ENCODE measurements at regions of chr11 and their contacts with region 1.

Region 1: GRCh38 chr11:57626895-57627294 is 22.8 kb downstream of the YPEL4 start:
- DNase-seq: no peak
- H3K4me3 ChIP-seq: no peak overlapping the region
- H3K27ac ChIP-seq: no peak overlapping the region
- H3K4me1 ChIP-seq: no peaks in the 10 kb centered on the region
- CTCF ChIP-seq: no peak

Region 2: DNA sequence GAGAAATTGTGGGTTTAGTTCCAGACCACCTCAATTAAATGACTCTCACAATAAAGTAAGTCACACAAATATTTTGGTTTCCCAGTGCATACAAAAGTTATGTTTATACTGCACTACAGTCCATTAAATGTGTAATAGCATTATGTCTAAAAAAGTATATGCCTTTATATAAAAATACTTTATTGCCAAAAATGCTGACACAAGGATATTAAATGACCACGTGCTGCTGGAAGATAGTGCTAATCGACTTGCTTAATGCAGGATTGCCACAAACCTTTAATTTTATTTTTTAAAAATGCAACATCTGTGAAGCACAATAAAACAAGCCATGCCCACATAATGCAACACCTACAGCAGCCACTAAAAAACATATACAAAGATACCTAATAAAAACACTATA is 611.2 kb before region 1 on chr11:
- CTCF ChIA-PET with region 1: no interaction called
- POLR2A ChIA-PET with region 1: no interaction called
- intact Hi-C with region 1: no loop called
- DNase-seq: no peak
- H3K4me3 ChIP-seq: no peak overlapping the region
- H3K27ac ChIP-seq: no peak overlapping the region
- H3K4me1 ChIP-seq: no peaks in the 10 kb centered on the region
- CTCF ChIP-seq: no peak

Region 3: DNA sequence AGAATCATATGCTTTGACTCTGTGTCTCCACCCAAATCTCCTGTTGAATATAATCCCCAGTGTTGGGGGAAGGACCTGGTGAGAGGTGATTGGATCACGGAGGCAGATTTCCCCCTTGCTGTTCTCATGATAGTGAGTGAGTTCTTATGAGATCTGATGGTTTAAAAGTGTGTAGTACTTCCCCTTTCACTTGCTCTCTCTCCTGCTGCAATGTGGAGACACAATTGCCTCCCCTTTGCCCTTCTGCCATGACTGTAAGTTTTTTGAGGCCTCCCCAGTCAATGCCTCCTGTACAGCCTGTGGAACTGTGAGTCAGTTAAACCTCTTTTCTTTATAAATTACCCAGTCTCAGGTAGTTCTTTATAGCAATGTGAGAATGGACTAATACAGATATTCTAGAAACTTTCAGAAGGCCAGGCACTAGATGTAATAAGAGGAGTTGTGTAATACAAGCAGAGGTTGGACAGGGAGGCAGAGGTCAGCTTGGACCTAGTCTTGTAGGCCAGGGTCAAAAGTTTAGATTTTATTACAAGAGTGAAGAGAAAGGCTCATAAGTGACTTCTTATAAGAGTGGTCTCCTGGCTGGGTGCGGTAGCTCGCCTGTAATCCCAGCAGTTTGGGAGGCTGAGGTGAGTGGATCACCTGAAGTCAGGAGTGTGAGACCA is 38.7 kb before region 1 on chr11:
- CTCF ChIA-PET with region 1: no interaction called
- POLR2A ChIA-PET with region 1: no interaction called
- intact Hi-C with region 1: loop called (anchors 5 kb)
- DNase-seq: no peak
- H3K4me3 ChIP-seq: no peak overlapping the region
- H3K27ac ChIP-seq: no peak overlapping the region
- H3K4me1 ChIP-seq: peaks cover 7% of the 10 kb centered on the region
- CTCF ChIP-seq: no peak

Region 4: GRCh38 chr11:57801183-57801485 is 174.2 kb after region 1 on chr11:
- CTCF ChIA-PET with region 1: no interaction called
- POLR2A ChIA-PET with region 1: no interaction called
- intact Hi-C with region 1: no loop called
- DNase-seq: peak; percentile 9
- H3K4me3 ChIP-seq: no peak overlapping the region
- H3K27ac ChIP-seq: no peak overlapping the region
- H3K4me1 ChIP-seq: peaks cover 12% of the 10 kb centered on the region
- CTCF ChIP-seq: no peak

Measured in OCI-LY7 (cell line).